Sciatic nerve (tissue), 2 donors: ENCODE measurements at regions of chr17 and their contacts with region 1.

Region 1: DNA sequence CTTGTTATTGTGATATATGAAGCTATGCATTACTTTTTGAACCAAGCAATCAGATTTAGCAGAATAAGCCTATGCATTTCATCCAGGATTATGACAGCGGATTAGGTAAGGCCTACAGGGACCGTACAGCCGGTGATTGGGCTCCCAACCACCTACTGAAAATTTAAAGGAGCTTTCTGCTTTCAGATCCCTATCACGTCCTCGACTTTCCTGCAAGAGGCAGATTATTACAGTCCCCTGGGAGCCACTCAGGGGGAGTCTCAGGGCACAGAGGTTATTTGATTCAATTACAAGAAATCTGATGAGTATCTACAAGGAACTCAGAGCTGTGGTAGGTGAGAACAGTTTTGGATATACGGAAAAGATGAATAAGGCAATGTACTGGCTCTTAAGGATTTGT is 80.7 kb downstream of the HS3ST3B1 start:
- DNase-seq: no peak
- ATAC-seq: no peak

Region 2: DNA sequence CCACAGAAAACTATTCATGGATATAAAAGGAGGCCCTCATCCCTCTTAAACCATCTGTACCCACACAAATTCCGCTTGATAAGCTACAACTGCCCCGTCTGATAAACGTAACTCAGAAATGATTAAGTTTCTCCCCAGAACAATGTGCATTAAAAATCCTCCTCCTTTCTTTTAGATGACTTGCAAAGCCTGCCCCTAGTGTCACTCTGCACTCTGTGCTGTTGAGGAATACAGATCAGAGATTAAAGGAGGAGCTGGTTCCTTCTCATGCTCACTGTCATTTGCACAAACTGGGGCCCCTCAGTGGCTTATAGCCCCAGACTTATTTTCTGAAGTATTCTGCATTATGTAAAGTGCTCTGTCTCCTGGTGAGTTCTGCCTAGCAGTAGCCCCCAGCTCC is 178.2 kb before region 1 on chr17:
- intact Hi-C with region 1: no loop called
- DNase-seq: no peak
- ATAC-seq: no peak

Region 3: DNA sequence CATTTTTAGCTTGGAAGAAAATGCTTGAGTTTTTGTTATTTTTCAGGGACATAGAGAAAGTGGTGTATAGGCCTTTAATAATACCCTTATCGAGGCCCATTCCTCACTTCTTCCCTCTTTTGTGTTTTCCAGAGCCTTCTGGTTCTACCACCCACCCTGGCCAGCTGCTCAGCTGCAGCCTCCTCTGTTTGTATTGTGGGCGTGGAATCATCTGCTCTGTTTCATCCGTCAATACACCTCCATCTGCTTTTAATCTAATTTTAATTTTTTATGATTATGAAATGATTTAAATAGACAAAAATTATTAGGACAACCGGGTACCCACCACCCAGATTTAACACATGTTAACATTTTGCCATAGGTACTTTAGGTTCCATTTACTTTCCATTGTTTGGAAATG is 56.9 kb after region 1 on chr17:
- intact Hi-C with region 1: loop called (anchors 2 kb)
- DNase-seq: no peak
- ATAC-seq: no peak